Activated naive CD4-positive, alpha-beta T cell treated with anti-CD3 and anti-CD28 coated beads for 36 hours (primary cell): ENCODE measurements at regions of chr19 and their contacts with region 1.

Region 1: GRCh38 chr19:14472202-14472938 is 2.8 kb downstream of the PTGER1 start:
- DNase-seq: peak; percentile 83
- H3K4me3 Mint-ChIP-seq: no peak overlapping the region
- H3K27ac Mint-ChIP-seq: no peak overlapping the region
- H3K4me1 Mint-ChIP-seq: peaks cover 31% of the 10 kb centered on the region
- H3K27me3 Mint-ChIP-seq: peaks cover 19% of the 10 kb centered on the region

Region 2: DNA sequence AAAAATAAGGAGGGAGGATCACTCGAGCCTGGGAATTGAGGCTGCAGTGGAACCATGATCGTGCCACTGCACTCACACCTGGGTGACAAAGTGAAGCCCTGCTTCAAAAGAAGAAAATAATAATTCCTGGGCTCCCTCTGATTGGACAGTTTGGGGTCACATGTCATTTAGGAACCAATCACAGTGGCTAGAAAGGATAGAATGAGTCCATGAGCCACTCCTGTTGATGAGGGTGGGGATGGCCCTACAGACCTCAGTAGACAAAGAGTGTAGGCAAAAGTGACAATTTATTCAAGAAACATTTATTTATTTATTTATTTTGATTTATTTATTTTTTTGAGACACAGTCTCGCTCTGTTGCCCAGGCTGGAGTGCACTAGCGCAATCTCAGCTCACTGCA is 117.9 kb before region 1 on chr19:
- CTCF ChIA-PET with region 1: interaction called, 4 read pairs
- intact Hi-C with region 1: loop called (anchors 1 kb)
- DNase-seq: no peak
- H3K4me3 Mint-ChIP-seq: no peak overlapping the region
- H3K27ac Mint-ChIP-seq: no peak overlapping the region
- H3K4me1 Mint-ChIP-seq: peaks cover 34% of the 10 kb centered on the region
- H3K27me3 Mint-ChIP-seq: no peaks in the 10 kb centered on the region